Activated CD8-positive, alpha-beta T cell treated with anti-CD3 and anti-CD28 coated beads, Interleukin-2, amount 10 ng/mL, durations not matched to agents 7 days and 5 days (primary cell): ENCODE measurements at regions of chr9 and their contacts with region 1.

Region 1: DNA sequence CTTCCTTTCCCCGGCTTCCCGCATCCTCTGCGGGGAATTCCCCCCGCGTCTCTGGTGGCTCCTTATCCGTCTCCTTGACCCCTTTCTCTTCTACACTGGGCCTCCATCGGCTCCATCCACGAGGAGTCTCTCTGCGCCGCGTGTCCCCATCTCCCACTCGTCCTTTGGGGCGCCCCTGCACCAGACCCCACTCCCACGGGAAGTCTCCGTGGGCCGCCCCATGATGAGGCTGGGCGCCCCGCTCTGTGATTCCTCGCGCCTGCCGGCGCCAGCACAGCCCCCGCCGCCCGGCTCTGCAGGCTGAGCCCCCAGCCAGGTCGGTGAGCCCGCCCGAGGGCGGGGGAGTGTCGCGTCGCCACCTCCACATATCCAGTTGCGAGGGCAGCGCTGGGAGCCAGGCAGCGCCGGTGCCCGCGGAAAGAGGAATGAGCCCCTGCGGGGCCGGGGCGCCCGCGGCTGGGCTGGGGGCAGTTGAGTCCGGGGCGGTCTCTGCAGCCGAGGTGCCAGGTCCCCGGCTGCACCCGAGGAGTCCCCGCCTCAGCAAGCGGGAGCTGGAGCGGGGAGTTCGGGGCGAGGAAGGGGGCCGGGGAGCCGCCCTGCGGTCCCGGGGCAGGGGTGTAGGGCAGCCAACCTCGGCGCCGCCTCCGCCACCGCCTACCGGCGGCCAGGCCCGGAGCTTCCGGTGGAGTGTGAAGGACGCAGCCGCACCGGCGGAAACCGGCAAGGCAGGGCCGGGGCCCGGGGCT is 2.1 kb upstream of the TRAF1 start:
- DNase-seq: peak; percentile 81
- ATAC-seq: peak; percentile 50
- H3K4me3 Mint-ChIP-seq: peak overlapping the region; percentile 90
- H3K27ac Mint-ChIP-seq: peak overlapping the region; percentile 95
- H3K4me1 Mint-ChIP-seq: peaks cover 85% of the 10 kb centered on the region
- H3K27me3 Mint-ChIP-seq: no peaks in the 10 kb centered on the region

Region 2: DNA sequence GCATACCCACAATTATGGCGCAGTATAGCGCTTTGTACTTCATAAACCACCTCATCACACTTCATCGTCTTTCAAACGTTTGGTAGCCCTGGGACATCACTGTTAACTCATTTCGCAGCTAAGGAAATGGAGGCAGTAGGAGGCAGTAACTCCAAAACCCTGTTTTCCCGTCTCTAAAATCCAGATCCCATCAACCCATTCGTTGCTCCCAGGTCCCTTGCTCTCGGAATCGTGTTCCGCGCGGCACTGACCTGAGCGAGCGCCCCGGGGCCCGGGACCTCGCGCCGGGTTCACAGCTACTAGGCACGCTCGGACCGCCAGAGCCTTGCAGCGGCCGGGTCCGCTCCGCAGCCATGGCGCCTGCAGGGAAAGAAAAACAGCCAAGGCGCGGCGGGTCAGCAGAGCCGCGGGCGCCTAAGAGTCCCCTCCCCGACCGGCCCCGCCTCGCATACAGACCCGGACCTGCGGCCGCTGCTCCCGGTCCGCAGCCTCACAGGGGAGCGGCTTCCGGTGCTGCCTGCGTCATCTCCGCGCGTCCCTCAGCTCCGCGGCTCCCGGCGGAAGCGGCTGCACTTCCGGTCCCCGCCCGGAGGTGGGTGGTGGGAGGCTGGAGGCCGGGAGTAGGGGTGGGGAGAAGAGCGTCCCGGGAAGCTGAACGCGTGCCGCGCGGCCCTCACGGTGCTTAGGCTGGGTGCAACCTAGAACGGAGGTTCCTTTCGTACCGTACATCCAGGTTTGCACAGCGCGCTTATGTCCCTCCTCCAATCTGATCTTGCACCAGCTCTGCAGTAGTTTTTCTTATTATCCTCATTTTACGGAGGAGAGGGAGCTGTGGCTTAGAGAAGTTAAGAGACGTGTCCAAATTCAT is 135.5 kb before region 1 on chr9 and contains the start of gene FBXW2:
- CTCF ChIA-PET with region 1: interaction called, 3 read pairs
- POLR2A ChIA-PET with region 1: interaction called, 12 read pairs
- DNase-seq: peak; percentile 91
- ATAC-seq: peak; percentile 91
- H3K4me3 Mint-ChIP-seq: peak within 1 kb of the TSS; percentile 82
- H3K27ac Mint-ChIP-seq: peak within 1 kb of the TSS; percentile 88
- H3K4me1 Mint-ChIP-seq: peaks cover 54% of the 10 kb centered on the region
- H3K27me3 Mint-ChIP-seq: no peaks in the 10 kb centered on the region
- total RNA-seq, gene FBXW2: 90.0 to 90.9 TPM

Region 3: GRCh38 chr9:120886490-120886967 is 42.1 kb before region 1 on chr9:
- CTCF ChIA-PET with region 1: interaction called, 22 read pairs
- POLR2A ChIA-PET with region 1: interaction called, 205 read pairs
- DNase-seq: no peak
- ATAC-seq: no peak
- H3K4me3 Mint-ChIP-seq: no peak overlapping the region
- H3K27ac Mint-ChIP-seq: peak overlapping the region; percentile 52
- H3K4me1 Mint-ChIP-seq: peaks cover 86% of the 10 kb centered on the region
- H3K27me3 Mint-ChIP-seq: no peaks in the 10 kb centered on the region

Region 4: GRCh38 chr9:120892748-120893610 is 35.7 kb before region 1 on chr9:
- CTCF ChIA-PET with region 1: interaction called, 22 read pairs
- POLR2A ChIA-PET with region 1: interaction called, 205 read pairs
- DNase-seq: peak; percentile 80
- ATAC-seq: peak; percentile 65
- H3K4me3 Mint-ChIP-seq: peak overlapping the region; percentile 70
- H3K27ac Mint-ChIP-seq: peak overlapping the region; percentile 95
- H3K4me1 Mint-ChIP-seq: peaks cover 90% of the 10 kb centered on the region
- H3K27me3 Mint-ChIP-seq: no peaks in the 10 kb centered on the region

Region 5: GRCh38 chr9:120904061-120904977 is 24.3 kb before region 1 on chr9:
- CTCF ChIA-PET with region 1: interaction called, 20 read pairs
- POLR2A ChIA-PET with region 1: interaction called, 119 read pairs
- DNase-seq: peak; percentile 69
- ATAC-seq: peak; percentile 55
- H3K4me3 Mint-ChIP-seq: no peak overlapping the region
- H3K27ac Mint-ChIP-seq: peak overlapping the region; percentile 88
- H3K4me1 Mint-ChIP-seq: peaks cover 90% of the 10 kb centered on the region
- H3K27me3 Mint-ChIP-seq: no peaks in the 10 kb centered on the region

Region 6: GRCh38 chr9:120909904-120910303 is 18.8 kb before region 1 on chr9:
- CTCF ChIA-PET with region 1: interaction called, 26 read pairs
- POLR2A ChIA-PET with region 1: interaction called, 119 read pairs
- DNase-seq: peak; percentile 60
- ATAC-seq: peak; percentile 44
- H3K4me3 Mint-ChIP-seq: no peak overlapping the region
- H3K27ac Mint-ChIP-seq: peak overlapping the region; percentile 89
- H3K4me1 Mint-ChIP-seq: peaks cover 83% of the 10 kb centered on the region
- H3K27me3 Mint-ChIP-seq: no peaks in the 10 kb centered on the region

Region 7: DNA sequence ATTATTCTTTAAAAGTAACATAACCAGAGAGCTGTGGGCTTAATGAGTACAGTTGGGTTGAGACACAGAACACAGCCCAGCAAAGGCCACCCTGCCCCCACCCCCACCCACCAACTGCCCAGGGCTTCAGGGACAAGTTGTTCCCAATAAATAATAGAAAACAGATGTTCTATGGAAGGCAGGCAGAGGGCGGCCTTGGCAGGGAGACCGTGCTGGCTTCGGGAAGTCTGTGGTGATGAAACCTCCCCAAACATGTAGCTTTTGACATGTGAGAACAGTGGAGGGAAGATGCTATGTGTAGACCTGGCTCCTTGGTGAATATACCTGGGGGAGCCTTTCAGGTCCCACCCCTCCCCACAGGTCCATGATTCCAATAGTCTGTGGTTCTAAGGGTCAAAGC is 12.1 kb before region 1 on chr9:
- CTCF ChIA-PET with region 1: interaction called, 26 read pairs
- POLR2A ChIA-PET with region 1: interaction called, 119 read pairs
- DNase-seq: no peak
- ATAC-seq: no peak
- H3K4me3 Mint-ChIP-seq: peak overlapping the region; percentile 34
- H3K27ac Mint-ChIP-seq: peak overlapping the region; percentile 80
- H3K4me1 Mint-ChIP-seq: peaks cover 86% of the 10 kb centered on the region
- H3K27me3 Mint-ChIP-seq: no peaks in the 10 kb centered on the region